Prostate gland (tissue), 2 donors: ENCODE measurements at regions of chrX and their contacts with region 1.

Region 1: DNA sequence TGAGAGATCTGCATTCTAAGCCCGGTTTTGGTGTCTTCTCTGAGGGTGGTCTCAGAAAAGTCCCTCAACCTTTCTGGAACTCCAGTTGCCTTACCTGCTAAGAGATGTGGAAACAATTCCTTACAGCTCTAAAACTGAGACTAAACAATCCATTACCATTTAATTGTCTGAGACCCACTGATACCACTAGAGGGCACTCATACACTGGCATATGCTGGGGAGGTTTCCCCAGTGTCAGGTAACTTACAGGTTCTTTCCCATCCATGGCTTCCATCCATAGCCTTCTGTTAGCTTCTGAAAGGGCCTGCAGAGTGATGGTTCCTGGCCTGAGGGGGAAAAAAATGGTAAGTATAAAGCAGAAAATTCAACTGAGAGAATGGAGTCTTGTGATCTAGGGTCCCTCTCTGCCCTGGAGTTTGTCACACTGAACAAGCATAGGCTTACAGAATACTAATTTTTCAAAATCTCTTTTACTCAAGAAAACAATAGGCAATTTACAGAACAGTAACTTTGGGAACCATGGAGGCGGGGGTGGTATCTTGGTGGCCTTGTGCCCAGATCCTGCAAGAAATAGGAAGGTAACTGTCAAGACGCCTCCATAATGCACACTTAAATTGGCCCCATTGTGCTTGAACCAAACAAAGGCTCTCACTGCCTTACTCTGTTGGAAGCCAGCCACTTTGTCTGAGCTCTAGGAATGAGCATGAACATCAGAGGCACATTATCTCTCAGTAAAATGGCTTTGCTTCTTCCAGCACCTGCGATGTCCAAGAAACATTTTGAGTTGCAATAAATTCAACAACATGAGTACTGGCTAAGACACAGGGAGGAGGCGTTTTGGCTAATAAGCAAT is 236.1 kb downstream of the OPHN1 start:
- DNase-seq: peak; percentile 43
- H3K4me3 ChIP-seq: no peak overlapping the region
- H3K27ac ChIP-seq: no peak overlapping the region
- H3K4me1 ChIP-seq: no peaks in the 10 kb centered on the region
- H3K27me3 ChIP-seq: no peaks in the 10 kb centered on the region
- CTCF ChIP-seq: peak; percentile 16 to 67 (median 55)
- POLR2A ChIP-seq: no peak

Region 2: DNA sequence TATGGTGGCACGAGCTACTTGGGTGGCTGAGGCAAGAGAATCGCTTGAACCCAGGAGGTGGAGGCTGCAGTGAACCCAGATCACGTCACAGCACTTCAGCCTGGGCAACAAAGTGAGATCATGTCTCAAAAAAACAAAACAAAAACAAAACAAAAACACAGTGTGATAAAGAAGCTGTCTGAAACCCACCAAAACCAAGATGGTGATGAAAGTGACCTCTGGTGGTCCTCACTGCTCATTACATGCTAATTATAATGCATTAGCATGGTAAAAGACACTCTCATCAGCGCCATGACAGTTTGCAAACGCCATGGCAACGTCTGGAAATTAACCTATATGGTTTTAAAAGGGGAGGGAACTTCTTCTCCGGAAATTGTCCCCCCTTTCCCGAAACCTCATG is 265.5 kb after region 1 on chrX:
- intact Hi-C with region 1: loop called (anchors 2 kb)
- DNase-seq: peak; percentile 6
- H3K4me3 ChIP-seq: no peak overlapping the region
- H3K27ac ChIP-seq: no peak overlapping the region
- H3K4me1 ChIP-seq: no peaks in the 10 kb centered on the region
- H3K27me3 ChIP-seq: no peaks in the 10 kb centered on the region
- CTCF ChIP-seq: peak in 3 of 4 experiments; percentile 32 to 54 (median 45)
- POLR2A ChIP-seq: no peak